IMR-90 (cell line): ENCODE measurements at regions of chr11 and their contacts with region 1.

Region 1: GRCh38 chr11:62645956-62646824 is at the start of gene GANAB:
- DNase-seq: peak; percentile 96
- ATAC-seq: peak; percentile 99
- H3K4me3 ChIP-seq: peak within 1 kb of the TSS; percentile 72
- H3K27ac ChIP-seq: peak within 1 kb of the TSS; percentile 86
- H3K4me1 ChIP-seq: peaks cover 6% of the 10 kb centered on the region; the same call in 1 of the 2 replicates
- H3K27me3 ChIP-seq: no peaks in the 10 kb centered on the region
- CTCF ChIP-seq: no peak
- POLR2A ChIP-seq: peak; percentile 93
- RAD21 ChIP-seq: no peak
- total RNA-seq, gene GANAB: 182 and 209 TPM in 2 replicates

Region 2: DNA sequence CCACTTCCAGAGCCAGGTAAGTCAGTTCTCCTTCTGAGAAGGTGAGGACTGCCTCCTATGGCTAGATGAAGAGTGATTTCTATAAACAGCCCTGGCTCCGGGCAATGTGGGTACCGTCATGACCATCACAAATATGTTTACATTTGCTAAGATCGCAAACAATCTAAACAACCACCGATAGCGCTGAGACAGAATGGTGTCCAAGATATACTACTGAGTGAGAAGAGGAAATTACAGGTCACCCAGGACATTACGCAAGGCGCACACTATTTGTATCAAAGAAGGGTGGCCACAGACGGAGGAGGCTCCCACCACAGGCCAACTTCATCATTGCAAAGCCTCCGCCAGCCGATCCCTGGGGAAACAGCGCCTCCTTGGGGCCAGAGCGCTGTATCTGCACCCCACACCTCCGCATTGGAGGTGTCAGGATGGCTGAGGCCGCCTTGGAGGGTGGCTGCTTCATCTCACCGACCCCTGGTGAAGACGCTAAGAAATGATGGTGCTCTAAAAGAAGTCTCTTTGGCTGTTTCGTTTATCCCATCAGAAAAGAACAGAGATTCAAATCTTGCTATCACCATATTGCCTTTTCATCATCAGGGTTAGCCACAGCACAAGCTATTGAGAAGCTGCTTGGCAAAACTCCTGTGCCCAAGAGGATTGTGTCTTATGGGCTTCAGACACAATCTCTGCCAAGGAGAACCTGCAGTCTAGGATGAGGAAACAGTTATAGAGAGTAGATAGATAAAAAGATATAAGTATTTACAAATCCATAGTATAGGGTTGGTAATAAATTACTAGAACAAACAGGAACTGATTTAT is 321.2 kb before region 1 on chr11:
- CTCF ChIA-PET with region 1: no interaction called
- POLR2A ChIA-PET with region 1: no interaction called
- dilution Hi-C with region 1: no loop called
- in situ Hi-C with region 1: no loop called
- intact Hi-C with region 1: no loop called
- DNase-seq: peak; percentile 18
- ATAC-seq: peak; percentile 63
- H3K4me3 ChIP-seq: no peak overlapping the region
- H3K27ac ChIP-seq: no peak overlapping the region
- H3K4me1 ChIP-seq: no peaks in the 10 kb centered on the region
- H3K27me3 ChIP-seq: peaks cover 17% of the 10 kb centered on the region
- CTCF ChIP-seq: peak; percentile 65
- POLR2A ChIP-seq: no peak
- RAD21 ChIP-seq: peak; percentile 53

Region 3: DNA sequence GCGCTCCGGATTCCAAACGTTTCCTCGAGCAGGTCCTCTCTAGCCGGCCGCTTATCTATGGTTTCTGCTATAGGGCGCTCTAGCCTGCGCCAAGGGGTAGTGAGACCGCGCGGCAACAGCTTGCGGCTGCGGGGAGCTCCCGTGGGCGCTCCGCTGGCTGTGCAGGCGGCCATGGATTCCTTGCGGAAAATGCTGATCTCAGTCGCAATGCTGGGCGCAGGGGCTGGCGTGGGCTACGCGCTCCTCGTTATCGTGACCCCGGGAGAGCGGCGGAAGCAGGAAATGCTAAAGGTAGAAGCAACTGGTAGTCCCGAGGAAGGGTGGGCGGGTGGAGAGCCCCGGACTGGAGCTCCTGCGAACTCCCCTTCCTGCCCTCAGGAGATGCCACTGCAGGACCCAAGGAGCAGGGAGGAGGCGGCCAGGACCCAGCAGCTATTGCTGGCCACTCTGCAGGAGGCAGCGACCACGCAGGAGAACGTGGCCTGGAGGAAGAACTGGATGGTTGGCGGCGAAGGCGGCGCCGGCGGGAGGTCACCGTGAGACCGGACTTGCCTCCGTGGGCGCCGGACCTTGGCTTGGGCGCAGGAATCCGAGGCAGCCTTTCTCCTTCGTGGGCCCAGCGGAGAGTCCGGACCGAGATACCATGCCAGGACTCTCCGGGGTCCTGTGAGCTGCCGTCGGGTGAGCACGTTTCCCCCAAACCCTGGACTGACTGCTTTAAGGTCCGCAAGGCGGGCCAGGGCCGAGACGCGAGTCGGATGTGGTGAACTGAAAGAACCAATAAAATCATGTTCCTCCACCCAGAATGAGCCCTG is 25.6 kb after region 1 on chr11 and contains the starts of genes LBHD1 and UQCC3:
- CTCF ChIA-PET with region 1: no interaction called
- POLR2A ChIA-PET with region 1: interaction called, 17 read pairs
- dilution Hi-C with region 1: no loop called
- in situ Hi-C with region 1: no loop called
- intact Hi-C with region 1: no loop called
- DNase-seq: peak; percentile 85
- ATAC-seq: peak; percentile 83
- H3K4me3 ChIP-seq: peak within 1 kb of the TSS; percentile 74
- H3K27ac ChIP-seq: peak within 1 kb of the TSS; percentile 96
- H3K4me1 ChIP-seq: peaks cover 4% of the 10 kb centered on the region
- H3K27me3 ChIP-seq: no peaks in the 10 kb centered on the region
- CTCF ChIP-seq: no peak
- POLR2A ChIP-seq: peak; percentile 53; the same call in 1 of the 2 replicates
- RAD21 ChIP-seq: no peak
- total RNA-seq, gene LBHD1: 1.4 and 1.6 TPM in 2 replicates
- total RNA-seq, gene UQCC3: 5.7 and 6.7 TPM in 2 replicates